AG04450 (cell line): ENCODE measurements at regions of chr14 and their contacts with region 1.

Region 1: DNA sequence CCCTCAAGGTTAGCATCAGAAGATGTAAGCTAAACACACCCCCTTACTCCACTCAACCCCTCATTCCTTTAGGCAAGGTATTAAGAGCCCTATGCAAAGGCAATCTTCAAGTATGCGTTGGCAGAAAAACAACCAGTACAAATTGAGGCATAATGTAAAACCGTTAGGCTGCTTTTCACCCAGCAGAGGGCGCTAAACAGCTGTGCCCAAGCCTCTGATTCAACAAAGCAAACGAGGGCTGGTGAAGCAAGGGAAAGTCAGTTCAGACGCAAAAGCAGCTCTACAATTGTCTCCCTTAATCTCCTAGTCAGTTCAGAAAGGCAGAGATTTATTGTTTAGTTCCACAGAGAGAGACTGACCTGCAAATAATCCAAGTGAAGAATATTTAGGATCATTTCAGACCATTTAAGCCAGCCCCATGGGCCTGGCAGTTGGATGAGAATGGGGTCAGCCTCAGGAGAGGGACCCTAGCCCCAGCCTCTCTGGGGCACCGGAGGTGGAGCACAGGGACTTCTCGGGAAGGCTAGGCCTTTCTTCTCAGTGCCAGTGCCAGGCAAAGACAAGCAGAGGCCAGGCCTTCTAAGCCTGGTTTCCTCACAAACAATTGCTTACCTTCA is 23.5 kb downstream of the DCAF5 start:
- DNase-seq: peak; percentile 71
- H3K4me3 ChIP-seq: no peak overlapping the region
- H3K27ac ChIP-seq: peak overlapping the region; percentile 22
- H3K27me3 ChIP-seq: no peaks in the 10 kb centered on the region
- CTCF ChIP-seq: peak; percentile 97

Region 2: GRCh38 chr14:69107407-69108003 is 21.9 kb before region 1 on chr14:
- CTCF ChIA-PET with region 1: interaction called, 15 read pairs
- POLR2A ChIA-PET with region 1: no interaction called
- DNase-seq: peak; percentile 51
- H3K4me3 ChIP-seq: no peak overlapping the region
- H3K27ac ChIP-seq: no peak overlapping the region
- H3K27me3 ChIP-seq: no peaks in the 10 kb centered on the region
- CTCF ChIP-seq: peak; percentile 73

Region 3: DNA sequence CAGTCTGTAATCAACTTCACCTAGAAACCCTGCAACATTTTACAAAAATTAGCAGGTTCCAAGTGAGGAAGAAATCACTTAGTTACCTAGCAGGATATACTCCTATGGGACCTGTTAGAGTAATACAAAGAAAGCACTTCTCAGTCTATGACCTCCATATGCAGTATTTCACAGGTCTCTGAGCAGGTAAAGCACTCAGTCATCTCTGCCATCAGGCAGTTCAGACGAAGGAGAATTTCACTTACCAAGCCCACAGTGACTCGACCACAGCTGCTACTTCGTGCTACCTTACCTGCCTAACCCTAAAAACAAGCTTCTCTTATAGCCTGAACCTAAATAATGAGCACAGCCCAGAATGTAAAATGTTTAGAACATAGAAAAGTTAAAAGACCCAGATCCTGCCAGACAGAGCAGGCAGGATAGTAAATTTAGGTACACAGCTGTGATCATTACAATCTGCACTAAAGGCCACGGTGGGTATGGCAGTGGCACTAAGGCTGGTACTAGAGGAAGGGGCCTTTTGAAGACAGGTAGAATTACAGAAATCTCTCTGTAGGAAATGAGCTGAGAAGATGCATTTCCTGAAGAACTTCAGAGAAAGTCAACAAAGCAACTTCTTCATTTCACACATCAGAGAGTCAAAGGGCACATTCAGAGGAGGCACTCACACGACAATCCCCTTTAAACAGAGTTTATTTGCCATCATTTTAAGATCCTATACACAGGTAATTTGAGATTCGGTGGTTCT is 12.2 kb before region 1 on chr14:
- CTCF ChIA-PET with region 1: interaction called, 26 read pairs
- POLR2A ChIA-PET with region 1: no interaction called
- DNase-seq: no peak
- H3K4me3 ChIP-seq: no peak overlapping the region
- H3K27ac ChIP-seq: no peak overlapping the region
- H3K27me3 ChIP-seq: no peaks in the 10 kb centered on the region
- CTCF ChIP-seq: no peak

Region 4: GRCh38 chr14:69142101-69142500 is 12.7 kb after region 1 on chr14:
- CTCF ChIA-PET with region 1: interaction called, 21 read pairs
- POLR2A ChIA-PET with region 1: no interaction called
- DNase-seq: no peak
- H3K4me3 ChIP-seq: no peak overlapping the region
- H3K27ac ChIP-seq: no peak overlapping the region
- H3K27me3 ChIP-seq: no peaks in the 10 kb centered on the region
- CTCF ChIP-seq: no peak

Region 5: DNA sequence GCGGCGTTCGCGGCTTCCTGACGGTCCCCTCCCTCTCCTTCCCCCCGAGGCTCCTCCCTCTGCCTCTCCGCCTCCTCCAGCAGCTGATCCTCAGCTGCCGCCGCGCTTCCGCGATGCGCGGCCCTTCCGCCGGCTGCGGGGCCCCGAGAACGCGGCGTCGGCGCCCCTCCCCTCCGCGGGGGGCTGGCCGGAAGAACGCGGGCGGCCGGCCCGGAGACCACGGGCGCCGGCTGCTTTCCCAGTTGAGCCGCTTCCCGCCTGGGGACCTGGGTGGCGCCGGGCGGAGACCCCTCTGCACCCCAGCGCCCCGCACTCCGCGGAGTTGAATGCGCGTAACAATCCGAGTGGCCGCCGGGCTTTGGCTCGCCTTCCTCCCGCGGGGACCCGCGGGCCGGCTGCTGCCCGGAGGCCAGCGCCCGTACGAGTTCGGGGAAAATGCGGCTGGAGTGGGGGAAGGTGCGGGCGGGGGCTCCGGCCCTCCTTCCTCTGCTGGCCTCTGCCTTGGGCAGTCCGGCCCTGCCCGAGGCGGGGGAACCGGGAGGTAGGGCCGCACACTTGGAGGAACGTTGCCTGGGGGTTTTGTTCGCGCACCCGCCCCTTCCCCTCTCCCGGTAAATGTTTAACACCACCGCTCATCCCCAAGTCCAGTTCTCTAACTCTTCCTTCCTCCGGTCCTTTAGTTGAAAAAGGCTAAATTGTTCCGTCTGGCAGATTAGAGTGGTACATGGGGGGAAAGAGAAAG is 23.9 kb after region 1 on chr14:
- CTCF ChIA-PET with region 1: interaction called, 20 read pairs
- POLR2A ChIA-PET with region 1: interaction called, 4 read pairs
- DNase-seq: peak; percentile 78
- H3K4me3 ChIP-seq: peak overlapping the region; percentile 88
- H3K27ac ChIP-seq: peak overlapping the region; percentile 77
- H3K27me3 ChIP-seq: no peaks in the 10 kb centered on the region
- CTCF ChIP-seq: no peak

Region 6: DNA sequence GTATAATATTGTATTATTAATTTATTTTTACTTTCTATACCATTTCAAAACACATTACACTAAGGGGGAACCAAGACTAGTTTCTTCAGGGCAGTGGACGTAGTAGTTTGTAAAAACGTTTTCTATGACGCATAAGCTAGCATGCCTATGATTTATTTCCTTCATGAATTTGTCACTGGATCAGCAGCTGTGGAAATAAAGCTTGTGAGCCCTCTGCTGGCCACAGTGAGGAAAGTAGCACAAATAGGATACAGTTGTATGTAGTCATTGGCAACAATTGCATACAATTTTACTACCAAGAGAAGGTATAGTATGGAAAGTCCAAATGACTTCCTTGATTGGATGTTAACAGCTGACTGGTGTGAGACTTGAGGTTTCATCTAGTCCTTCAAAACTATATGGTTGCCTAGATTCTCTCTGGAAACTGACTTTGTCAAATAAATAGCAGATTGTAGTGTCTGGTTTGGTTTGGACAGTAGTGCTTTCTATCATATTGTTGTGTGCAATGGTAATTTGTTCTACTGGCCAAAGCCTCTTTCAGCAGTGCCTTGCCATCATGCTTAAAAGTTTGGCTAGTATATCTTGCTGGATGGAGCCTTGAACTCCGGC is 330.8 kb after region 1 on chr14:
- CTCF ChIA-PET with region 1: interaction called, 10 read pairs
- POLR2A ChIA-PET with region 1: no interaction called
- DNase-seq: peak; percentile 80
- H3K4me3 ChIP-seq: no peak overlapping the region
- H3K27ac ChIP-seq: no peak overlapping the region
- H3K27me3 ChIP-seq: no peaks in the 10 kb centered on the region
- CTCF ChIP-seq: peak; percentile 85